Left lung (tissue), 14 donors: ENCODE measurements at regions of chr12 and their contacts with region 1.

Region 1: GRCh38 chr12:76621582-76622024 is 62.0 kb upstream of the OSBPL8 start:
- DNase-seq: peak in 3 of 4 donors; percentile 55 to 69 (median 59)
- ATAC-seq: peak; percentile 98
- H3K4me3 ChIP-seq: no peak overlapping the region
- H3K27ac ChIP-seq: no peak overlapping the region
- H3K4me1 ChIP-seq: peaks cover 0 to 9% of the 10 kb centered on the region in 2 donors
- H3K27me3 ChIP-seq: no peaks in the 10 kb centered on the region
- CTCF ChIP-seq: peak; percentile 87 to 94

Region 2: DNA sequence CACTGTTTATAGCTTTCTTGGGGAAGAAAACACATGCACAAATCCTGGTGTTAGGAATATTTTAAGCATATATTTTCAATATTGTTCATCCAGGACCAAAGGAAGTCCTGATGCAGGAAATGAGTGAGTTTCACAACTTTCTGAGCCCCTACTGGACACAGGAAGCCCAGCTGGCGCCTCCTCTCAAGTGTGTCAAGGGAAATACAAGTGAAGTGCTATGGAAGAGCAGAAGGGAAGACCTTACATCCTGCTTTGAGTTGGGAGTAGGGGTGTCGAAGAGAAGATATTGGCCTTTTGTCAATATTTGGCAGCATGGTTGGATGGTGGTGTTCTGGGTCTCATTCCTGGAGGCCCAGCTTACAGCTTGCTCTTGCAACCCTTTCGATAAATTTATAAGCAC is 76.2 kb after region 1 on chr12:
- intact Hi-C with region 1: no loop called
- DNase-seq: no peak
- ATAC-seq: no peak
- H3K4me3 ChIP-seq: no peak overlapping the region
- H3K27ac ChIP-seq: no peak overlapping the region
- H3K4me1 ChIP-seq: no peaks in the 10 kb centered on the region
- H3K27me3 ChIP-seq: no peaks in the 10 kb centered on the region
- CTCF ChIP-seq: no peak

Region 3: GRCh38 chr12:76790564-76791552 is 169.3 kb after region 1 on chr12:
- intact Hi-C with region 1: loop called in 1 of 2 experiments (anchors 5 kb)
- DNase-seq: peak in 2 of 4 donors; percentile 16 to 23
- ATAC-seq: peak; percentile 74
- H3K4me3 ChIP-seq: no peak overlapping the region
- H3K27ac ChIP-seq: no peak overlapping the region
- H3K4me1 ChIP-seq: peaks cover 0 to 4% of the 10 kb centered on the region in 2 donors
- H3K27me3 ChIP-seq: no peaks in the 10 kb centered on the region
- CTCF ChIP-seq: peak; percentile 31 to 62

Region 4: DNA sequence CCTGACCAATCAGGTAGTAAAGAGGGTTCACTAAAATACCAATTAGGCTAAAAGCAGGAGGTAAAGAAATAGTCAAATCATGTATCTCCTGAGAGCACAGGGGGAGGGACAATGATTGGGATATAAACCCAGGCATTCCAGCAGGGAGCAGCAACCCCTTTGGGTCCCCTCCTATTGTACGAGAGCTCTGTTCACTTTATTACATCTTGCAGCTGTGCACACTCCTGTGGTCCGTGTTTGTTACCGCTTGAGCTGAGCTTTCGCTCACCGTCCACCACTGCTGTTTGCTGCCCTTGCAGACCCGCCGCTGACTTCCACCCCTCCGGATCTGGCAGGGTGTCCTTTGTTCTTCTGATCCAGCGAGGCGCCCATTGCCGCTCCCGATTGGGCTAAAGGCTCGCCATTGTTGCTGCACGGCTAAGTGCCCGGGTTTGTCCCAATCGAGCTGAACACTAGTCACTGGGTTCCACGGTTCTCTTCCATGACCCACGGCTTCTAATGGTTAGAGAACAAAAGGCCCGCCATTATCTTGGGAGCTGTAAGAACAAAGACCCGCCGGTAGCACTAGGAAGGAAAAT is 379.7 kb after region 1 on chr12:
- intact Hi-C with region 1: loop called in 1 of 2 experiments (anchors 10 kb)
- DNase-seq: no peak
- ATAC-seq: no peak
- H3K4me3 ChIP-seq: no peak overlapping the region
- H3K27ac ChIP-seq: no peak overlapping the region
- H3K4me1 ChIP-seq: no peaks in the 10 kb centered on the region
- H3K27me3 ChIP-seq: no peaks in the 10 kb centered on the region
- CTCF ChIP-seq: no peak

Region 5: DNA sequence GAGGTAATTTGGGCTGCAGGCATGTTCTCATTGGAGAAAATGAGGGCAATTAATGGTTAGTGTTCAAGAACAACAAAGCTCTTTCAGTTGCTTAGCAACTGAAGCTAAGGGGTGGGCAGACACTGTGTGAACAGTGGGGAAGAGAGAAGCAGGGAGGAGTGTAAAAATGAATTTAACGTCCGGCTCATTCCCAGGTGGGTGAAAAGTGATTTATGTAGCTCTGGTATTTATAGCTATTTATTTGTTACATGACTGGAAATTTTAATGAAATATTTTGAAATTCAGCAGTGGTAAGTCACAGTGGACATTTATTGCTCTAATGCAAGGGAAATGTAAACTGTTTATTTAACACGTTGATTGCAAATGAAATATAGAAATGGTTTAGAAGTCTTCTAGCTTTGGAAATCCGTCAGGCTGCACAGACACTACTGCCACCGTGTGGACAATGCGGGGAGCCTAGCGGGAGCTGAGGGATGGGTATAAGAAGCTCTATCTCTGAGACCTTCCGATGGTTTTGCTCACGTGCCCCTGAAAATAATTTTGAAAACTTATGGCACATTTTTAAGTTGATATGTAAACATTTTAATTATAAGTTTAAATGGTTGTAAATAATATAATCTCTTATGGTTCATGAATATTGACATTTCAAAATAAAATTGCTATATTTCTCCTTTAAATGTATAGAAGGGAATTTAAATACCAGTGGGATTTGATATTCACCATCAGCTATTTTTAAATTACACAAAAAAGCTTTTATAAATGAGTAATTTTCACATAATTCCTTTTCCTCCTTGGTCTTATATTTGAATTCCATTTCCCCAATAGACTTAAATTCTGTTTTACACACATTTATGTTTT is 389.3 kb after region 1 on chr12:
- intact Hi-C with region 1: loop called (anchors 5 to 10 kb)
- DNase-seq: peak; percentile 70 to 84 (median 79)
- ATAC-seq: peak; percentile 93
- H3K4me3 ChIP-seq: no peak overlapping the region
- H3K27ac ChIP-seq: no peak overlapping the region
- H3K4me1 ChIP-seq: no peaks in the 10 kb centered on the region
- H3K27me3 ChIP-seq: no peaks in the 10 kb centered on the region
- CTCF ChIP-seq: peak; percentile 88 to 94